Endothelial cell of umbilical vein (primary cell): ENCODE measurements at regions of chr15 and their contacts with region 1.

Region 1: DNA sequence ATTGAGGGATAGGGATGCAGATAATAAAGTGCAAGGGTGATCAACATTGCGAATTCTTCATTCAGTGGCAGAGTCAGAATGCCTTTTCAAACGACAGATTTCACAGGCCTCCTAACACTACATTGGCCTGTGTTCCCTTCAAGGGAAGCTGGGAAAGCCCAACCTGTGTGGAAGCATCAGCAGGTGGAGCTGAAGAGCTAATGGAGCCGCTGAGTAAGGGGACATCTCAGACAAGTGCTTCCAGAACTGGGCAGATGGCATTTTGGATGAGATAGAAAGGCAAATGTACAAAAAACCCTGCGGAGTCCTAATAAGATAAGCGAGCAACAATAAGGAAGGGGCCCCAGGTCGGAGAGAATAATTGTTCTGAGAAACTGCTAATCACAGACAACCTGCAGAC is 8.5 kb upstream of the SLC24A5 start:
- DNase-seq: peak; percentile 49
- H3K4me3 ChIP-seq: no peak overlapping the region
- H3K27ac ChIP-seq: no peak overlapping the region
- H3K4me1 ChIP-seq: no peaks in the 10 kb centered on the region
- H3K27me3 ChIP-seq: peaks cover 2 to 3% of the 10 kb centered on the region in 2 experiments
- CTCF ChIP-seq: peak; percentile 27 to 60
- POLR2A ChIP-seq: no peak

Region 2: GRCh38 chr15:48205981-48206380 is 93.7 kb after region 1 on chr15 and contains the start of gene SLC12A1:
- CTCF ChIA-PET with region 1: interaction called, 16 read pairs
- POLR2A ChIA-PET with region 1: no interaction called
- dilution Hi-C with region 1: no loop called
- intact Hi-C with region 1: no loop called
- DNase-seq: no peak
- H3K4me3 ChIP-seq: no peak within 1 kb of the TSS
- H3K27ac ChIP-seq: no peak within 1 kb of the TSS
- H3K4me1 ChIP-seq: no peaks in the 10 kb centered on the region
- H3K27me3 ChIP-seq: peaks cover 3% of the 10 kb centered on the region in 2 experiments
- CTCF ChIP-seq: no peak
- POLR2A ChIP-seq: no peak
- total RNA-seq, gene SLC12A1: not detected in 2 replicates

Region 3: DNA sequence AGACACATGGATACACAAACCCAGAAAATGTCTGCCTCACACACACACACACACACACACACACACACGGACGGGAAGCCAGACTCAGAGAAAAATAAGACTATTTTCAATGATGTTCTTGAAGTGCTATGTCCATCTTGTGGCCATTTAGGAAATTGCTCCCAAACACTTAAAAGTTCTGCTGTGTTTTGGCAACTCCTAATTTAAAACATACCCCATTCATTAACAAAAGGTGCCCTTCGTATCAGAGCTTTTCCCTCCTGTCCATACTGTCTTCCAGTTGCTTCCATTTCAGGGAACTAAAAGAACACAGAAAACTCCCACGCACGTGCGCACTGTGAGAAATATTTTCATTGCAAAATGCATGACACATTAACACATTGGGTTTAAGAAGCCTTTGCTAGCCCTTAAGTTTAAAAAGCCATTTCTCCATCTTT is 138.4 kb after region 1 on chr15:
- CTCF ChIA-PET with region 1: interaction called, 7 read pairs
- POLR2A ChIA-PET with region 1: no interaction called
- dilution Hi-C with region 1: no loop called
- intact Hi-C with region 1: loop called (anchors 1 kb)
- DNase-seq: peak; percentile 71
- H3K4me3 ChIP-seq: no peak overlapping the region
- H3K27ac ChIP-seq: no peak overlapping the region
- H3K4me1 ChIP-seq: no peaks in the 10 kb centered on the region
- H3K27me3 ChIP-seq: no peaks in the 10 kb centered on the region
- CTCF ChIP-seq: peak; percentile 57 to 61
- POLR2A ChIP-seq: no peak

Region 4: GRCh38 chr15:48352474-48353072 is 240.3 kb after region 1 on chr15:
- CTCF ChIA-PET with region 1: interaction called, 15 read pairs
- POLR2A ChIA-PET with region 1: no interaction called
- dilution Hi-C with region 1: no loop called
- intact Hi-C with region 1: no loop called
- DNase-seq: peak; percentile 67
- H3K4me3 ChIP-seq: no peak overlapping the region
- H3K27ac ChIP-seq: no peak overlapping the region
- H3K4me1 ChIP-seq: no peaks in the 10 kb centered on the region
- H3K27me3 ChIP-seq: no peaks in the 10 kb centered on the region
- CTCF ChIP-seq: peak; percentile 68 to 69
- POLR2A ChIP-seq: no peak